Naive thymus-derived CD8-positive, alpha-beta T cell (primary cell): ENCODE measurements at regions of chr1 and their contacts with region 1.

Region 1: DNA sequence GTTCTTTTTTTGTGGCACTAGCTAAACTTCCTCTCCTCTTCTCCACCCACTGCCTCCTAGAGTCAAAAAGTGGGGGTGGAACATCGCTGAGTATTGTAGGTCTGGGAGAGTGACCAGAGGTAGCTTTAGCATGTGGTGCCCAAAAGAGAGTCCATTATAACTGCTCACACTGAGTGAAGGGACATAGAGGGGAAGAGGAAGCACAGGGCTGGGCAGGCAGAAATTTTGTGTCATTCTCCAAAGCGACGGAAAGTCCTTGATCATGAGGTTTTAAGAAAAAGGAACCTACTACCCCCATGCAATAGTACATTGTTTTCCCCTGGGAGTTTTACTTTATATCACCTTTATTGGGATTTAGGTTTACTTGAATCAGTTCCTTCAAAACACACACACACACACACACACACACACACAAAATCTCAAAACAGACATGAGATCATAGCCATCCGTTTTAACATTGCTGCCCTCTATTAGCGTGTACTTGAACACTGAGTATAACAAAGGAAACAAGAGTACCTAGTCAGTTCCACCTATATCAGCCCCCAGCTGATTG is 4.1 kb downstream of the CD84 start:
- DNase-seq: peak in 1 of 10 donors; percentile 9
- ATAC-seq: peak; percentile 5 to 20
- H3K4me3 Mint-ChIP-seq: peak overlapping the region; percentile 81 to 95 (median 92)
- H3K27ac Mint-ChIP-seq: peak overlapping the region; percentile 88 to 100 (median 95)
- H3K4me1 Mint-ChIP-seq: peaks cover 49 to 94% (median 87%) of the 10 kb centered on the region in 4 donors
- H3K27me3 Mint-ChIP-seq: no peaks in the 10 kb centered on the region

Region 2: DNA sequence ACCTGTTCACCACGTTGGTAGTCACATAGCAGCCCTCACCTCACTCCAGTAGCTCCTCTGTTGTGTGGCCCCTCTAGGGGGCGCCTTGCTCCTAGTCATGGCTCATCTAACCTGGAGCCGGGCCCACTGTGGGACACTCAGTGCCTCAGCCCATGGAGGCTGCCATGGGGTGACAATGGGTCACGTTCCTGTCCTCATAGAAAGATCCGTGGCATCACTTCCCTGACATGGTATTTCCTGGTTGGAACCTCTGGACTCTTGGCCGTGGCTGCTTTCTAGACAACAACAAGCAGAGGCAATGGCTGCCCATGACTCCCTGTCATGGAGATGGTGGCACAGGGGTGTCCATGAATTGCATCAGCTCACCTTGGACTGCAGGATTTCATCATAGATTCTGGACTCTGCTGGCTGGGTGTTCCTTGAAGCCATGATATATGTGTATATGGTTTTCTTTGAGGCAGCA is 24.6 kb before region 1 on chr1:
- POLR2A ChIA-PET with region 1: interaction called, 10 read pairs
- DNase-seq: peak in 8 of 10 donors; percentile 27 to 79 (median 45)
- ATAC-seq: peak; percentile 77 to 83
- H3K4me3 Mint-ChIP-seq: no peak overlapping the region
- H3K27ac Mint-ChIP-seq: peak overlapping the region in 8 of 10 donors; percentile 34 to 83 (median 70)
- H3K4me1 Mint-ChIP-seq: peaks cover 12 to 73% (median 25%) of the 10 kb centered on the region in 4 donors
- H3K27me3 Mint-ChIP-seq: no peaks in the 10 kb centered on the region

Region 3: DNA sequence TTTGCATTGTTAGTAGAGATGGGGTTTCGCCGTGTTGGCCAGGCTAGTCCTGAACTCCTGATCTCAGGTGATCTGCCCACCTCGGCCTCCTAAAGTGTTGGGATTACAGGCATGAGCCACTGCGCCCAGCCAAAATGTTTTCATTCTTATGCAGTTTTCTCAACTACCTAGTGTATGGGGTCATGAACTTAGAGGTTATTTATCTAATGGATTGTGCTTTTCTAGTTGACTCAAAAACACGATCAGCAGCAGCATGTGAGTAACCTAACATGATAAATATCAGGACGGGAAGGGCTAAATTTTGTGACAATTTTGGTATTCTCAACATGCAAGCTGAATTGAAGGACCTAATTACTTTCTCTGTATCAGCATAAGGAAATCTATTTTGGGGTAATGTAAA is 13.3 kb after region 1 on chr1:
- POLR2A ChIA-PET with region 1: interaction called, 12 read pairs
- DNase-seq: no peak
- ATAC-seq: no peak
- H3K4me3 Mint-ChIP-seq: peak overlapping the region in 1 of 10 donors; percentile 6
- H3K27ac Mint-ChIP-seq: no peak overlapping the region
- H3K4me1 Mint-ChIP-seq: peaks cover 13 to 35% (median 21%) of the 10 kb centered on the region in 4 donors
- H3K27me3 Mint-ChIP-seq: no peaks in the 10 kb centered on the region